HEK293T (cell line): ENCODE measurements at regions of chr12 and their contacts with region 1.

Region 1: DNA sequence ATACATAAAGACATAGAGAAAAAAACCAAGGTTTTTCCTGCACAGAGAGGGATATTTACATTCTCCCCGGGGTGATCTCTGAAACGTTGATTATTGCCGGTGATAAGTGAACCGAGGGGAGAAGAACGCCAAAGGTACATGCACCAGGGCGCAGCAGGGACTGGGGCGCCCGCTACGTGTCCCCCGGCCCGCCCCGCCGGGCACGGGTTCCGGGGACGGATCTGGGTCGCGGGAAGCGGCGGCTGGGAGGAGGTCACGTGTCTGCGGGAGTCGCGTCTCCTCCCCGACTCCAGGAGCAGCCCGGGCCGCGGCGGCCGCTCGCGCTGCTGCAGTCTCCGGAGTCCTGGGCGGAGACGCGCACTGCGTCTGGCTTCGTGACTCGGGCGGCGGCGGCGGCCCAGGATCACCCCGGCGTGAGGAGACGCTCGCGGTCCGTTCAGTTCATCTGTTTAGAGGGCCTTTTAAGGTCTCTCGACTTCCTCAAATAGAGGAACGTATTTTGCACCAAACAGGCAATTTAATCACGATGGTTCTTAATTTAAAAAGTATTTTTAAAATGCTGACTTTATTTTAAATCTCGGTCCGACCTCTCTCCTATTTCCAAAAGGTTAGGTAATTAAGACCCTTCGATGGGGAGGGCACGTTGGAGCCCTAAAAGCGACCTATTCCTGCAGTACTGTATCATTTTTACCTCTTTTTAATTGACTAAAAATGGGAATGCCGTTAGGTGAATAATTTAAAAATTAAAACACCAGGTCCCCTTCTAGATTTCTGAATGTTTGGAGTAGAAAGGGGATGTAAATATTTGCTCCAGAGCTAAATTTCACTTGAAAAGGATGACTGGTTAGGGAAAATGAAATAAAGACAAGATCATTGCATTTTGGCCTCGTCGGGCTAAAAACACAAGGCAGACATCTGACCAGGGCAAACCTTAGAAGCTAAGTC is 1.8 kb upstream of the BHLHE41 start:
- DNase-seq: peak; percentile 83

Region 2: GRCh38 chr12:25653487-25654175 is 473.0 kb before region 1 on chr12:
- CTCF ChIA-PET with region 1: no interaction called
- POLR2A ChIA-PET with region 1: no interaction called
- DNase-seq: no peak

Region 3: DNA sequence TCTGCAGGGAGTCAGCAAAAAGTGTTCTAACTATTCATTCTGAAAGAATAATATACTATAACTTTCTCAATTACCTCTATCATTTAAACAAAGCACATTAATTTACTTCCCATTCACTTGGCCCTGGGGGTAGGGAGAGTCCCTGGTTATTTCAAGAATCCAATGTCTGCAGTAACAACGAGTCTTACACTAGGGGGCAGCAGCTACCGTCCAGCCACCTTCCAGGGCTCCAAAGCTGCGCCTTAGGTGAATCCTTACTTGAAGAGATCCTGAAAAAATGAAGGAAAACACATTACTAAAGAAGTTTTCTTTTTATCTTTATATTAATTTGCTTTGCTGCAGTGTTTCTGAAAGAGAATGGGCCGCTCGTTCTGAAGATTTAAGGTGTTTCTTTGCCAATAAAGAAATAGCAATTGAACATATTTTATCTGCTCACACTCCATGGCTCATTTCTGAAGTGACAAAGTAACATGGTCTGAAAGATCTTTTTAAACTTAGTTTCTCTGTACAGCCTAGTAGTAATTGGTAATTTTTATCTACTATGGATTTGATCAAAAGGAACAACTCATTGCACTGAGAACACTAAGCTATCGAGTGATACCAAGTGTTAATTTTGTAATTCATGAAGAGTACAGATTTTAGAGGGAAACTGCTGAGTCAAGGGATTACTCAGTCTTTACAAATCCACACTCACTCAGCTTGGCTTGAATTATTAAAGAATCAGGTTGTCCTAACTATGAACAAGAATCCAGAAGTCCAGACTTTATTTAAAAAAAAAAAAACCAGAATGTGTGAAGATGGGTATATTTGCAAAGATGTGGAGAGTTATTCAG is 29.4 kb before region 1 on chr12:
- CTCF ChIA-PET with region 1: no interaction called
- POLR2A ChIA-PET with region 1: no interaction called
- DNase-seq: peak; percentile 82

Region 4: DNA sequence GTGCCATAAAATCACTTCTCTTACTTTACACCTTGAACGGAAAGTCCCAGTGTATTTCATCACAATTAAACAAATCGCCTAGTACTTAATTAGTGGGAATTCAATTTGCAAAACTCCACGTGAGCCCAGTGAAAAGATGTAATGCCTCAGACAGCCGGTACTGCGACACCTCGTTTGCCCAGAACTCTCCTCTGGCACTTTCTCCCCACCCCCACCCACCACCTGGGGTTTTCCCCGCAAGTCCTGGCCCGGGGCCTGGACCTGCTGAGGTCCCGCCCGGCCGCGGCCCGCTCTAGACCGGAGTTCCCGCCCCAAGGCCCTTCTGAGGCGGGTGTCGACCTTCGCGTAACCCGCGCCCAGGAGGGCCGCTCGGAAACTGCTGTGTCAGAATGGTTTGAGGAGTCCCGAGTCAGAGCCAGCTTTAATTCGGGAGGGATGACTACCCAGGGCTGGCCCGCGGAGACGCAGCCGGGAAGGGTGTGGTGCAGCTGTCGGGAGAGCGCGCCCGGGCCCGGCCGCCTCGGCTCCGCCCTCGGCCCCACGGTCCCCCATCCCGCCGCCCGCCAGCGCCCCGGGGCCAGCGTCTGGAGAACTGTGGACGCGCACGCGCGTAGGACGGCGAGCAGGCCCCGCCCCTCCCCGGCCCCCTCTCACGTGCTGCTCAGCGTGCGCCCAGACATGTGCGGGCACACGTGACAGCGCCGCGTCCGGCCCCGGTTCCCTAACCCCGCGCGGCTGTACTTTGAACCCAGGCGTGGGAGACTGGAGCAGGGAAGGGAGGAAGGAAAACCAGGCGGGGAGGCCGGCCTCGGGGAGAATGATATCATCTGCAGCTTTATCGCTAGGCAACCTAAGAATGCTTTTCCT is 12.5 kb before region 1 on chr12:
- CTCF ChIA-PET with region 1: no interaction called
- POLR2A ChIA-PET with region 1: interaction called, 30 read pairs
- DNase-seq: peak; percentile 88

Region 5: DNA sequence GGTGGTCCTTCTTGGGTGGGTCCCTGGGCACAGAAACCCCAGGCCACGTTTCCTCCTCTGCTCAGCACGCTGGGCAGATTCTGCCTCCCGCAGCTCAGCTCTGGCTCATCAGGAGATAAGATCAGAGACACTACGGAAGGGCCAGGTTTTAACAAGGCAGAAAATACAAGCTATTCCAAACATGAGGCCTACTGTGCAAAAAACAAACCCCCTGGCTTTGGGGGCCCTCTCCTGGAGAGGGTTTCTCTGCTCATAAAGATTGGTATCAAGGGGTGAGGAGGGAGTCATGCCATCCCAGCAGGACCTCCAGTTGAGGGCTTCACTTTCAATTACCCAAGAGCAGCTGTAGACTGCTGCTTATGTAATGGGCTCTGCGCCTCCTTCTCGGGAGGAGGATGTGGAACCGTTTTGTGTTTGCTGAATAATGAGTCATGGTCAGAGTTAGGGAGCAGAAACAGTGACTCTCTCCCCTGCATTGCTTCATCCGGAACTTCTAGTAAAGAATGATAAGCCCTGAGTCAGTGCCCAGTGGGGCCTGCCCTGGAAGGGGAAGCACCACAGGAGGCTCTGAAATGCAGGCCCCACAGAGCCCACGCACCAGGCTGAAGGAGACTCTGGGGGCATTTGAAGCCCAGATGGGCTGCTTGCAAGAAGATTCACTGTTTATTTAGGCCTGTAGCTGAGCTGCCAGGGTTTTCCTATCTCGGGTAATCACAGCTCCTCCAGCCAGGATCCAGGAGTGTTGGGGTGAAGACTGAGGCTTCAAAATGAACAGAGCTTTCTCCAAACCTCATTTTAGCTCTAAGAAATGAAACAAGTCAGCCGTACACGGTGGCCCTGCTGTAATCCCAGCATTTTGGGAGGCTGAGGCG is 148.1 kb after region 1 on chr12:
- CTCF ChIA-PET with region 1: interaction called, 5 read pairs
- POLR2A ChIA-PET with region 1: interaction called, 32 read pairs
- DNase-seq: peak; percentile 62